ENCODE measurements at regions of chr11 and their contacts with region 1.

Region 1: DNA sequence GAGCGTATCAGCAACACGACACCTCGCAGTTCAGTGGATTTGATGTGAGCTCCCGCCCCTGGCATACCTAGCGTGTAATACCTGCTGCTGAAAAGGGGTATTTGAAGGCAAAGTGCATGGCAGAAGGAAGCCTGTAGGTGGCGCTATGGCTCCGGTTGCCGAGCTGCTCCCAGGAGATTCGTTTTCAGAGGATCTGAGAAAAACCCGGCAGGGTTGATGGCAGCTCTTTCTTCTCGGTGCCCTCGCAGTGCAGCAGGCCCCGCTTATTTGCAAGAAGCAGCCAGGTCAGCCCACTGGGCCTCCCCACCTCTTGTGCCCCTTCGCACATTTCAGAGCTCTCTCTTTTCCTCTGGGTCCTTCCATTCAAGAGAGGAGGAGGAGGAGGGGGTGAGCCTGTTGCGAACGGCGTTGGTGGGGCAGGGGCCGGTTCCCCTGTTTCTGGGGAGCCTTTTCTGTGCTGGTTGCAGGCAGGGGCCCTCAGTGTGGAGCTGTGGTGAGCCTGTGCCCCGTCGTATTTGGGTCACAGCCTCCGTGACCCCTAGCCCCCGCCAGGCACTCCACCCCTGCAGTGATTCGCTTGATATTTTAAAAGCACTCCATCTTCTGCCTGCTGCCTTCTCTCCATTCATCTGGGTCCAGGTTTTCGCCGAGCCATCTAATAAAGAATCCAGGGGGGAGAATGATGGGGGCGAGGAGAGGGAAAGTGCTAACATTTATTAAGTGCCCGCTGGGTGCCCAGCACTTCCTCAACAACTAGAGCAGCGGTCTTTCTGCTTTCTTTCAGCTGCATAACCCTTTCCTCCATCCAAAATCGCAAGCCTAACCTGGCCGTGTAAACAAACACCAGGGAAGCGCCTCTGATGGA is 85.3 kb upstream of the SYT13 start:
- DNase-seq: peak; percentile 84
- H3K4me3 ChIP-seq: no peak overlapping the region; a peak in 1 of 4 replicates
- H3K27ac ChIP-seq: no peak overlapping the region
- H3K4me1 ChIP-seq: peaks cover 0 to 3% of the 10 kb centered on the region in 2 experiments; a peak in 2 of 4 replicates
- H3K27me3 ChIP-seq: peaks cover 25% of the 10 kb centered on the region; the same call in 1 of the 2 replicates
- CTCF ChIP-seq: peak; percentile 96
- EP300 ChIP-seq: no peak
- RAD21 ChIP-seq: peak; percentile 97

Region 2: DNA sequence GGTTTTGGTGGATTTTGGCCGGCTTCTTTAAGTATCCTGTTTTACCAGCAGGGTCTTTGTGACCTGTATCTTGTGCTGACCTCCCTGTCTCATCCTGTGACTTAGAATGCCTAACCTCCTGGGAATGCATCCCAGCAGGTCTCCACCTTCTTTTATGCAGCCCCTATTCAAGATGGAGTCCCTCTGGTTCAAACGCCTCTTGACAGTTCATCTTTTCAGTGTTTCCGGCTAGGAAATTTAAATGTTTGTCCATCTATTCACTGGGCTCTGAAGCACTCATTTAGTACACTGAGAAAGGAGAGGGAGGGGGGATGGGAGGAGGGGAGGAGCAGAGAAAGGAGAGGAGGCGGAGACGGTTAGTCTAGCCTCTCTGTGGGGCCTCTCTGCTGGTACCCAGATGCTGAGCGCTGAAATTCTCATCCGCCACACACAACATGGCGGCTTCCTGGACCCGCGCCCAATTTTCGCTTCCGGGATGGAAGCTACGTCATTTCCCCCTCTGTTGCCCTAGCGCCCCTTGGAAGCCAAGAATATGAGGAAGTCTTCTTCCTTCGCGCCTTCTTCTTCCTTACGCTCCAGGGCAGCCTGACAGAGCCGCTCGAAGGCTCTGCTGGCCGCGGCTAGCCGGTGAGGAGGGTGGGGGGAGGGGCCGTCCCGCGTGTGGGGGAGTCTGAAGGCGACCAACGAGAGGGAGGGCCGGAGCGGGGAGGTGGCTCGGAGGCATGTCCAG is 16.3 kb before region 1 on chr11:
- CTCF ChIA-PET with region 1: interaction called, 28 read pairs
- POLR2A ChIA-PET with region 1: no interaction called
- DNase-seq: peak; percentile 88
- H3K4me3 ChIP-seq: peak overlapping the region; percentile 66 to 67
- H3K27ac ChIP-seq: peak overlapping the region in 1 of 2 experiments; percentile 64; a peak in 1 of 4 replicates
- H3K4me1 ChIP-seq: peaks cover 0 to 4% of the 10 kb centered on the region in 2 experiments; a peak in 2 of 4 replicates
- H3K27me3 ChIP-seq: no peaks in the 10 kb centered on the region
- CTCF ChIP-seq: no peak
- EP300 ChIP-seq: no peak
- RAD21 ChIP-seq: no peak

Region 3: GRCh38 chr11:45390407-45390806 is 18.9 kb after region 1 on chr11:
- CTCF ChIA-PET with region 1: interaction called, 29 read pairs
- POLR2A ChIA-PET with region 1: no interaction called
- DNase-seq: no peak
- H3K4me3 ChIP-seq: no peak overlapping the region
- H3K27ac ChIP-seq: no peak overlapping the region
- H3K4me1 ChIP-seq: peaks cover 8% of the 10 kb centered on the region in 2 experiments; a peak in 1 of 4 replicates
- H3K27me3 ChIP-seq: no peaks in the 10 kb centered on the region
- CTCF ChIP-seq: no peak
- EP300 ChIP-seq: no peak
- RAD21 ChIP-seq: no peak

Region 4: GRCh38 chr11:45411228-45411946 is 39.9 kb after region 1 on chr11:
- CTCF ChIA-PET with region 1: interaction called, 27 read pairs
- POLR2A ChIA-PET with region 1: no interaction called
- DNase-seq: peak; percentile 46
- H3K4me3 ChIP-seq: peak overlapping the region; percentile 17 to 20; a peak in 1 of 4 replicates
- H3K27ac ChIP-seq: peak overlapping the region; percentile 86 to 94
- H3K4me1 ChIP-seq: peaks cover 26 to 38% of the 10 kb centered on the region in 2 experiments
- H3K27me3 ChIP-seq: no peaks in the 10 kb centered on the region
- CTCF ChIP-seq: no peak
- EP300 ChIP-seq: peak in 1 of 2 experiments; percentile 54; a peak in 2 of 4 replicates
- RAD21 ChIP-seq: no peak

Region 5: GRCh38 chr11:45423475-45424120 is 52.1 kb after region 1 on chr11:
- CTCF ChIA-PET with region 1: no interaction called
- POLR2A ChIA-PET with region 1: no interaction called
- DNase-seq: no peak
- H3K4me3 ChIP-seq: no peak overlapping the region
- H3K27ac ChIP-seq: no peak overlapping the region
- H3K4me1 ChIP-seq: peaks cover 0 to 5% of the 10 kb centered on the region in 2 experiments; a peak in 1 of 4 replicates
- H3K27me3 ChIP-seq: peaks cover 7% of the 10 kb centered on the region; the same call in 1 of the 2 replicates
- CTCF ChIP-seq: no peak
- EP300 ChIP-seq: no peak
- RAD21 ChIP-seq: no peak

Region 6: GRCh38 chr11:45440111-45440510 is 68.6 kb after region 1 on chr11:
- CTCF ChIA-PET with region 1: no interaction called
- POLR2A ChIA-PET with region 1: no interaction called
- DNase-seq: no peak
- H3K4me3 ChIP-seq: no peak overlapping the region
- H3K27ac ChIP-seq: no peak overlapping the region
- H3K4me1 ChIP-seq: peaks cover 0 to 9% of the 10 kb centered on the region in 2 experiments; a peak in 1 of 4 replicates
- H3K27me3 ChIP-seq: peaks cover 10% of the 10 kb centered on the region; the same call in 1 of the 2 replicates
- CTCF ChIP-seq: no peak
- EP300 ChIP-seq: no peak
- RAD21 ChIP-seq: no peak

Region 7: DNA sequence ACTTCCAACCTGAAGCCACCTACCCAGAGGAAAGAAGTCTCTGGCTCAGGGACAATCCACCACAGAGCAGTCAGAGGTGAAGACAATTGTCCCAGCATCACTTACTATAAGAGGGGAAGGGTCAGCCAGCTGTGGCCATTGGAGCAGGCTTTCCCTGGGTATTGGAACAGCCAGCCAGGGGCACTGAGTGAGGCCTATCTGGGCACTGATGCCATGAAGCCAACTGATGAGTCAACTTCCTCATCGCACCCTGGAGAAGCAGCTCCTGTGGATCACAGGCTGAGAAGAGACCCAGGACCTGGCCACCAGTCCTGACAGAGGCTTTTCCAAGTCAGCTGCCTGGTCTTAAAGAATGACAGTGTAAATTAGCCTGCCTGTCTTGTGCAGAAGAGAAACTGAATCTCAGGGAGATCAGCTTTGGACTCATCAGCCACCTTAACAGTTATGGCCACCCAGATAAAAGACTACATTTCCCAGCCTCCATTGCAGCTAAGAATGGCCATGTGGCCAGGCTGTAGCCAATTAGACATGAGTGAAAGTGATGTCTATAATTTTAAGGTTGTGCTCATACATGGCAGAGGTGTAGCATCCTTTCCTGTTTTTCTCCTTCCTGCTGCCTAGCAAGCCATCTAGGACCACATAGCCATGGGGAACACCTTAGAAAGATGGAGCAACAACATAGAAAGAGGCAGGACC is 274.9 kb after region 1 on chr11:
- CTCF ChIA-PET with region 1: interaction called, 302 read pairs
- POLR2A ChIA-PET with region 1: no interaction called
- DNase-seq: peak; percentile 51
- H3K4me3 ChIP-seq: no peak overlapping the region
- H3K27ac ChIP-seq: no peak overlapping the region
- H3K4me1 ChIP-seq: no peaks in the 10 kb centered on the region
- H3K27me3 ChIP-seq: no peaks in the 10 kb centered on the region; the same call in 1 of the 2 replicates
- CTCF ChIP-seq: no peak
- EP300 ChIP-seq: no peak
- RAD21 ChIP-seq: no peak

Region 8: GRCh38 chr11:45676522-45677095 is 305.1 kb after region 1 on chr11:
- CTCF ChIA-PET with region 1: interaction called, 10 read pairs
- POLR2A ChIA-PET with region 1: no interaction called
- DNase-seq: no peak
- H3K4me3 ChIP-seq: no peak overlapping the region
- H3K27ac ChIP-seq: no peak overlapping the region
- H3K4me1 ChIP-seq: peaks cover 0 to 2% of the 10 kb centered on the region in 2 experiments; a peak in 1 of 4 replicates
- H3K27me3 ChIP-seq: peaks cover 6% of the 10 kb centered on the region; the same call in 1 of the 2 replicates
- CTCF ChIP-seq: no peak
- EP300 ChIP-seq: no peak
- RAD21 ChIP-seq: no peak

Measured in SK-N-SH (cell line).